ENCODE measurements at regions of chr10 and their contacts with region 1.

Region 1: GRCh38 chr10:102645741-102646609 is 1.7 kb downstream of the TRIM8 start:
- DNase-seq: peak; percentile 93
- ATAC-seq: peak; percentile 50
- H3K4me3 Mint-ChIP-seq: peak overlapping the region; percentile 94
- H3K27ac Mint-ChIP-seq: peak overlapping the region; percentile 98
- H3K4me1 Mint-ChIP-seq: peaks cover 52% of the 10 kb centered on the region
- H3K27me3 Mint-ChIP-seq: no peaks in the 10 kb centered on the region

Region 2: DNA sequence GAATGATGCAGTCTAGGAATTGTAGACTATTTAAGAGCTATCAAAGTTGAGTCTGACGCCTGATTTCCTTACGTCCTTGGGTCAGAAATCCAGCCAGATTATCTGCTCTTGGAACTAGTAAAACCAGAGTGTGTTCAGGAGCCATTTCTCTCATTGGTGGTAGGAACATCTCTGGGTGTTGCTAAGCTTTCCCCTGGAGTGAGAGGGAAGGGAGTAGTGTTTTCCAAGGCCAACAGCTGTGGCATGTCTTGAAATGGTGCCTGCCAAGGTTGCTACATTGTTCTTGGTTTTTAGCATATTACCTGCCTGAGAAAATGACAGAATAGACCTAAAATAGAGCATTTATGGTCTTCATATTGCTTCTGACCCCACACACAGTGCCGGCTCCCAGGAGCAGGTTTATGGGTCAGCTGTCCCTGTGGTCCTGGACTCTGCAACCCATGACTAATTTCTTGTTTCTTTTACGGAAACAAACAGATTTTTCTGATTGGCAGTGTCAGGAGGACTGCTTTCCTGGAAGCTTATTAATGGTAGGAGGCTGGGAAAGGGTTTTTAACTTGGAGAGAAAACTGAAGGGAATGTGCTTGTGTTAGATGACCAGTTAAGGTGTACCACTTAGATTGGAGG is 383.1 kb before region 1 on chr10:
- CTCF ChIA-PET with region 1: no interaction called
- DNase-seq: no peak
- ATAC-seq: no peak
- H3K4me3 Mint-ChIP-seq: no peak overlapping the region
- H3K27ac Mint-ChIP-seq: no peak overlapping the region
- H3K4me1 Mint-ChIP-seq: peaks cover 17% of the 10 kb centered on the region
- H3K27me3 Mint-ChIP-seq: no peaks in the 10 kb centered on the region

Region 3: DNA sequence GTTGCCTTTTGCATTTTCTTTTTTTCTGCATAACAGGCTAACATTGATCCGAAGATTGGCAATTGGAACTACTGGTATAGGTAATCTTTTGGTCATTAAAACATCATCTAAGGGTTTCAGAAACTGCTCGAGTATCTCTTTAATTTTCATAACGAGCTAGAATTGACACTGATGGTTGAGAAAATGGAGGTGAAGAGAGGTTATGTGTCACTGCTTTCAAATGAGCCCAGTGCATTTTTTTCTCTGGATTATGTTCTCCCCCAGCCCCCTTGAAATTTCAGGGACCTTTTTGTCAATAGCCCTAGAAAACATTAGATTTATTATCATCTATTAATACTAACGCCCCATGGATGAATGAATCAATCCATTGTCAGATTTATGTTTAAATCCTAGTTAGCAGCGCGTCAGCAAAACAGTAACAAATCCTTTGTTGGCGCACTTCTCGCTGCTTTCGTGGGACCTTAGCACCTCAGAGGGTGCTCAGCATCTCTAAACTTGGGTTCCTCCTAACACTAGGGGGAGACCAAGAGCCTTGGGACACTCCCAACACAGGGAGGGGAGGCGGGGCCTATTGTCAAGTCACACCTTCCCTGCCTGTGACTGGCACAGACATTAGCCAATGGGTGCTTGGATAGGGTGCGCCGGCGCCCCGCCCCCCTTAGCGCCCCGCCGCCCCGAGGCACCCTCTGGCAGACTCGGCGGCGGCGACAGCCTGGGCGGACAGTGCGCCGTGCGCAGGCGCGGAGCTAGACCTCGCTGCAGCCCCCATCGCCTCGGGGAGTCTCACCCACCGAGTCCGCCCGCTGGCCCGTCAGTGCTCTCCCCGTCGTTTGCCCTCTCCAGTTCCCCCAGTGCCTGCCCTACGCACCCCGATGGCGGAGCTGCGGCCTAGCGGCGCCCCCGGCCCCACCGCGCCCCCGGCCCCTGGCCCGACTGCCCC is 142.4 kb before region 1 on chr10 and contains the start of gene SUFU:
- CTCF ChIA-PET with region 1: interaction called, 23 read pairs
- DNase-seq: peak; percentile 99
- ATAC-seq: peak; percentile 78
- H3K4me3 Mint-ChIP-seq: no peak within 1 kb of the TSS
- H3K27ac Mint-ChIP-seq: peak within 1 kb of the TSS; percentile 78
- H3K4me1 Mint-ChIP-seq: peaks cover 28% of the 10 kb centered on the region
- H3K27me3 Mint-ChIP-seq: no peaks in the 10 kb centered on the region
- total RNA-seq, gene SUFU: 9.8 to 12.9 TPM

Region 4: GRCh38 chr10:102596506-102596971 is 49.4 kb before region 1 on chr10:
- CTCF ChIA-PET with region 1: no interaction called
- DNase-seq: peak; percentile 57
- ATAC-seq: peak; percentile 49
- H3K4me3 Mint-ChIP-seq: no peak overlapping the region
- H3K27ac Mint-ChIP-seq: no peak overlapping the region
- H3K4me1 Mint-ChIP-seq: no peaks in the 10 kb centered on the region
- H3K27me3 Mint-ChIP-seq: no peaks in the 10 kb centered on the region

Region 5: GRCh38 chr10:102660888-102661657 is 15.1 kb after region 1 on chr10:
- CTCF ChIA-PET with region 1: interaction called, 50 read pairs
- DNase-seq: peak; percentile 88
- ATAC-seq: peak; percentile 88
- H3K4me3 Mint-ChIP-seq: peak overlapping the region; percentile 42
- H3K27ac Mint-ChIP-seq: peak overlapping the region; percentile 87
- H3K4me1 Mint-ChIP-seq: peaks cover 57% of the 10 kb centered on the region
- H3K27me3 Mint-ChIP-seq: no peaks in the 10 kb centered on the region

Region 6: GRCh38 chr10:102669206-102670064 is 23.5 kb after region 1 on chr10:
- CTCF ChIA-PET with region 1: interaction called, 26 read pairs
- DNase-seq: no peak
- ATAC-seq: no peak
- H3K4me3 Mint-ChIP-seq: no peak overlapping the region
- H3K27ac Mint-ChIP-seq: peak overlapping the region; percentile 43
- H3K4me1 Mint-ChIP-seq: peaks cover 13% of the 10 kb centered on the region
- H3K27me3 Mint-ChIP-seq: no peaks in the 10 kb centered on the region

Measured in activated CD8-positive, alpha-beta memory T cell treated with anti-CD3 and anti-CD28 coated beads, Interleukin-2, amount 10 ng/mL, durations not matched to agents 7 days and 5 days (primary cell).